PC-3 (cell line): ENCODE measurements at regions of chrX and their contacts with region 1.

Region 1: GRCh38 chrX:37825209-37825842 is 22.0 kb downstream of the DYNLT3 start:
- DNase-seq: peak; percentile 61
- ATAC-seq: peak; percentile 67
- H3K4me3 ChIP-seq: peak overlapping the region; percentile 21; the same call in 1 of the 2 replicates
- H3K27ac ChIP-seq: peak overlapping the region; percentile 48; the same call in 1 of the 2 replicates
- H3K4me1 ChIP-seq: peaks cover 12% of the 10 kb centered on the region
- H3K27me3 ChIP-seq: no peaks in the 10 kb centered on the region
- CTCF ChIP-seq: peak; percentile 90

Region 2: DNA sequence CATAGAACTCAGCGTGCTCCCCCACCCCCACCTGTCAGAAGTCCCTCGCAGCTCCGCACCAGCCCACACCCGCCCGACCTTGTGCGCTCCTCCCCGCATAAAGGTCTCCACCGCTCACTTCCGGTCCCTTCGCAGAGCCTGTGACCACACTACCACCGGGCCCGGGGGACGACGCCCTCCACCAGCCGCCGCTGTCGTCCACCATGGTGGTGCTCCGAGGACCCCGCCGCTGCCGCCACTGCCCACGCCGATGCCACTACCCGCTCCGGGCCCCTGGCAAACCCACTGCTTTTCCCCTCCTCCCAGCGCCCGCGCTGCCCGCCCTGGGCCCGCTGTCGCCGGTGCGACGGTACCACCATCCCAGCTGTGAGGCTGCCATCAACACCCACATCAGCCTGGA is 333.6 kb before region 1 on chrX:
- CTCF ChIA-PET with region 1: no interaction called
- POLR2A ChIA-PET with region 1: no interaction called
- intact Hi-C with region 1: loop called (anchors 5 kb)
- DNase-seq: no peak
- ATAC-seq: no peak
- H3K4me3 ChIP-seq: no peak overlapping the region
- H3K27ac ChIP-seq: no peak overlapping the region
- H3K4me1 ChIP-seq: no peaks in the 10 kb centered on the region
- H3K27me3 ChIP-seq: no peaks in the 10 kb centered on the region
- CTCF ChIP-seq: no peak

Region 3: GRCh38 chrX:37578045-37578444 is 247.3 kb before region 1 on chrX:
- CTCF ChIA-PET with region 1: no interaction called
- POLR2A ChIA-PET with region 1: no interaction called
- intact Hi-C with region 1: loop called (anchors 5 kb)
- DNase-seq: peak; percentile 45
- ATAC-seq: no peak; the same call in 1 of the 2 replicates
- H3K4me3 ChIP-seq: no peak overlapping the region
- H3K27ac ChIP-seq: no peak overlapping the region
- H3K4me1 ChIP-seq: peaks cover 6% of the 10 kb centered on the region
- H3K27me3 ChIP-seq: no peaks in the 10 kb centered on the region
- CTCF ChIP-seq: no peak

Region 4: GRCh38 chrX:37745354-37745753 is 80.0 kb before region 1 on chrX:
- CTCF ChIA-PET with region 1: interaction called, 3 read pairs
- POLR2A ChIA-PET with region 1: no interaction called
- intact Hi-C with region 1: loop called (anchors 1 kb)
- DNase-seq: peak; percentile 84
- ATAC-seq: peak; percentile 89
- H3K4me3 ChIP-seq: no peak overlapping the region
- H3K27ac ChIP-seq: no peak overlapping the region
- H3K4me1 ChIP-seq: peaks cover 17% of the 10 kb centered on the region
- H3K27me3 ChIP-seq: no peaks in the 10 kb centered on the region
- CTCF ChIP-seq: peak; percentile 80

Region 5: DNA sequence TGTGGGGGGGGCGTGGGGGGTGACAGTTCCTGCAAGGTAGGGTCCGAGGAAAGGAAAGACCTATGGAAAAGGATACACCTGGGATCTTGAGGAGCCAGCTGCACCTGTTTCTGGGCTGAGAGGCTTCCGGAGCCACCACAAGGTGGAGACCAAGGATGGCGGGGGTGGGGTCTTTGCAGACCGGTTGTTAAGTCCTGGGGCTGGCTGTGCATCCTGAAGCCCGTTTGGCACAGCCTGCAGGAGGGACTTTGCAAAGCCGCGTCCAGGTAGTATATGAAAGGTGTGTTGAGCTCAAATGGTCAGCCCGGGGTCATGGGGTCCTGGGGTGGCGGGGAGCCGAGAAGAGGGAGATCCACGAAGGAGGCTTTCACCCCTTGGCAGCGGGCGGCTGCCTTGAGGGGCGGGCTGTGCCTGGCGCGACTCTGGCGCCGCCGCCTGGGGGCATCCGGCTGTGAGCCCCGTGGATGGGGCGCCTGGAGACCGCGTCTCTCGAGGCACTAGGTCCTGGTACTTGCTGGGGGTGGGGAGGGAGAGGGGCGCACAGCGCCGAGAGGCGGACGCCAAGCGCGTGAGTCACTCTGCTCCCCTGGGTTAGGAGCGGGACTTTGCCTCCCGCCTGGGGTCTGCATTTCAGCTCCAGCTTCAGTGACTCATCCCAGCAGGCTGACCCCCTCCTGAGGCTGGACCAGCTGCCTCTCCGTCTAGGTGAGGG is 80.3 kb after region 1 on chrX:
- CTCF ChIA-PET with region 1: no interaction called
- POLR2A ChIA-PET with region 1: no interaction called
- intact Hi-C with region 1: no loop called
- DNase-seq: no peak
- ATAC-seq: no peak
- H3K4me3 ChIP-seq: no peak overlapping the region
- H3K27ac ChIP-seq: no peak overlapping the region
- H3K4me1 ChIP-seq: peaks cover 5% of the 10 kb centered on the region; the same call in 1 of the 2 replicates
- H3K27me3 ChIP-seq: no peaks in the 10 kb centered on the region
- CTCF ChIP-seq: no peak

Region 6: GRCh38 chrX:38175140-38175539 is 349.8 kb after region 1 on chrX:
- CTCF ChIA-PET with region 1: no interaction called
- POLR2A ChIA-PET with region 1: no interaction called
- intact Hi-C with region 1: loop called (anchors 10 kb)
- DNase-seq: peak; percentile 66
- ATAC-seq: peak; percentile 93
- H3K4me3 ChIP-seq: no peak overlapping the region
- H3K27ac ChIP-seq: no peak overlapping the region
- H3K4me1 ChIP-seq: no peaks in the 10 kb centered on the region
- H3K27me3 ChIP-seq: no peaks in the 10 kb centered on the region
- CTCF ChIP-seq: peak; percentile 77